ENCODE measurements at regions of chr4 and their contacts with region 1.

Region 1: GRCh38 chr4:45920861-45921260 is 203.0 kb downstream of the GABRG1 start:
- DNase-seq: no peak
- H3K4me3 ChIP-seq: no peak overlapping the region
- H3K27ac ChIP-seq: no peak overlapping the region
- H3K4me1 ChIP-seq: no peaks in the 10 kb centered on the region
- H3K27me3 ChIP-seq: no peaks in the 10 kb centered on the region
- CTCF ChIP-seq: no peak
- POLR2A ChIP-seq: no peak

Region 2: DNA sequence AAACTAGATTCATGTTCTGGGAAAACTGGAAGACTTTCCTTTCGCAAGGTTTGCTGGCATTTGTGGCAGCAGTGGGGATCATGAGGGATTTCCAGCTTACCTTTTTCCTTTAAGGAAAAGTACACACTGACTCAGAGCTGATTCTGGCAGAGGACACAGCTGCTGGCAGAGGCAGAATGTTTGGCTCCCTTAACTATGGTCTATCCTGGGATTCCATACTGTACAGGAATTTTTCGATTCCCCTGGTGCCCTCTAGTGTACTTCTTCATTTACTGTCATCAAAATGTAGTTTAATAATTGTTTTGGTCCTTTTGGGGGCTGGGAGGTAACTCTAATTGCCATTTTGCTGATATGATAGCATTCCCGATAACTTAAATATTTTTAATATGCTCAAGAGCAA is 50.2 kb after region 1 on chr4:
- intact Hi-C with region 1: loop called (anchors 2 kb)
- DNase-seq: no peak
- H3K4me3 ChIP-seq: no peak overlapping the region
- H3K27ac ChIP-seq: no peak overlapping the region
- H3K4me1 ChIP-seq: no peaks in the 10 kb centered on the region
- H3K27me3 ChIP-seq: no peaks in the 10 kb centered on the region
- CTCF ChIP-seq: no peak
- POLR2A ChIP-seq: no peak